ENCODE measurements at regions of chr14 and their contacts with region 1.

Region 1: GRCh38 chr14:55297611-55298441 is 26.6 kb downstream of the FBXO34 start:
- DNase-seq: peak; percentile 84
- H3K4me3 Mint-ChIP-seq: peak overlapping the region; percentile 66
- H3K27ac Mint-ChIP-seq: peak overlapping the region; percentile 71
- H3K4me1 Mint-ChIP-seq: peaks cover 25% of the 10 kb centered on the region
- H3K27me3 Mint-ChIP-seq: no peaks in the 10 kb centered on the region
- CTCF ChIP-seq: peak; percentile 28

Region 2: GRCh38 chr14:55277972-55278740 is 19.7 kb before region 1 on chr14:
- CTCF ChIA-PET with region 1: interaction called, 10 read pairs
- POLR2A ChIA-PET with region 1: interaction called, 11 read pairs
- intact Hi-C with region 1: no loop called
- DNase-seq: no peak
- H3K4me3 Mint-ChIP-seq: no peak overlapping the region
- H3K27ac Mint-ChIP-seq: no peak overlapping the region
- H3K4me1 Mint-ChIP-seq: peaks cover 16% of the 10 kb centered on the region
- H3K27me3 Mint-ChIP-seq: no peaks in the 10 kb centered on the region
- CTCF ChIP-seq: no peak

Measured in MCF 10A (cell line).